PC-3 (cell line): ENCODE measurements at regions of chr3 and their contacts with region 1.

Region 1: GRCh38 chr3:122415720-122416654 is at the start of gene WDR5B:
- DNase-seq: peak; percentile 99
- ATAC-seq: peak; percentile 90
- H3K4me3 ChIP-seq: peak within 1 kb of the TSS; percentile 75
- H3K27ac ChIP-seq: peak within 1 kb of the TSS; percentile 74
- H3K4me1 ChIP-seq: peaks cover 27% of the 10 kb centered on the region
- H3K27me3 ChIP-seq: no peaks in the 10 kb centered on the region
- CTCF ChIP-seq: no peak
- total RNA-seq, gene WDR5B: 3.1 and 4.0 TPM in 2 replicates

Region 2: GRCh38 chr3:122383771-122384697 is 32.0 kb before region 1 on chr3 and contains the start of gene FAM162A:
- CTCF ChIA-PET with region 1: no interaction called
- POLR2A ChIA-PET with region 1: interaction called, 14 read pairs
- intact Hi-C with region 1: loop called (anchors 1 kb)
- DNase-seq: peak; percentile 98
- ATAC-seq: peak; percentile 90
- H3K4me3 ChIP-seq: peak within 1 kb of the TSS; percentile 90
- H3K27ac ChIP-seq: peak within 1 kb of the TSS; percentile 40
- H3K4me1 ChIP-seq: peaks cover 44% of the 10 kb centered on the region
- H3K27me3 ChIP-seq: no peaks in the 10 kb centered on the region
- CTCF ChIP-seq: peak; percentile 83
- total RNA-seq, gene FAM162A: 86.4 and 126 TPM in 2 replicates

Region 3: DNA sequence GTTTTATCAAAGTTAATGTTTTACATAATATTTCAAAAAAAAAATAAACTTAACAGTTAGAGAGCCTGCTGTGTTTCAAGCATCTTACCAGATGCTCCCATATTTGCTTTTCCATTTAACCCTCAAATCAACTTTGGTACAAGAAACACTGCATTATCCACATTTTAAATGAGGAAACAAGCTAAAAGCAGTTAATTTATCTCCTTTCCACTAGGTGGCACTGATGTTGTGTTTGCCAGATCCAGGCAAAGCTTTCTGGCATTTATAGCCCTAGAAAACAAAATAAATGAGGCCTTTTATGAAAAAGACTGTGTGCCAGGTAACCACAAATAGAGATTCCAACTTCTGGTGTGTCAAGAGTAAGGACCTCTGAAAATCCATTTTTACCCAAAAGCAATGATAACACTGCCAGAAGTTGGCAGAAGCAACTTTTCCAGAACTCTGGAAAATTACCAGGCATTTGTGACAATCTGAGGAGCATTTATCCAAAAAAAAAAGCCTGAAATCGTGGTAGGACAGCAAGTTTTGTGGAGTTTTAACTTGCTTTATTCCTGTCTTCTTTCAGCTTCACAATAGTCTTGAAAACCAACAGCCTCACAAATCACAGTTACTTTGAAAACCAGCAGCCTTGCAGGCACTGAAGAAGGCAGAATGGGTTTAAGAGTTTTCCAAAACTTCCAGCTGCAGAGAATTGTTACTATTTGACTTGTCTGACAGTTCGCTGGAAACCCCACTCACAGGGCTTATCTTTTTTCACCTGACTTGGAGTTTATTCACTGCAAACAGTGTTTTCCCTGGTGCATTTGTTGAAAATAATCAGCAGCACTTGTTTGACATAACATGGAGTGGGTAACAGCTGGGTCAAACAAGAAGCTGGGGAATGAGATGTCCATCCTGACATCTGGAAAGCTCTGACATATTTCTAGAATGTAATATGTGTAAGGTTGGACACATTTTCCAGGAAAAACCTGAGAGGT is 22.8 kb before region 1 on chr3:
- CTCF ChIA-PET with region 1: interaction called, 3 read pairs
- POLR2A ChIA-PET with region 1: interaction called, 5 read pairs
- intact Hi-C with region 1: loop called (anchors 2 kb)
- DNase-seq: peak; percentile 71
- ATAC-seq: peak; percentile 57
- H3K4me3 ChIP-seq: no peak overlapping the region
- H3K27ac ChIP-seq: no peak overlapping the region
- H3K4me1 ChIP-seq: no peaks in the 10 kb centered on the region
- H3K27me3 ChIP-seq: no peaks in the 10 kb centered on the region
- CTCF ChIP-seq: peak; percentile 93

Region 4: GRCh38 chr3:122468896-122469533 is 53.0 kb after region 1 on chr3:
- CTCF ChIA-PET with region 1: no interaction called
- POLR2A ChIA-PET with region 1: no interaction called
- intact Hi-C with region 1: no loop called
- DNase-seq: no peak
- ATAC-seq: no peak
- H3K4me3 ChIP-seq: no peak overlapping the region
- H3K27ac ChIP-seq: no peak overlapping the region
- H3K4me1 ChIP-seq: no peaks in the 10 kb centered on the region
- H3K27me3 ChIP-seq: no peaks in the 10 kb centered on the region
- CTCF ChIP-seq: no peak

Region 5: GRCh38 chr3:122555275-122556071 is 139.5 kb after region 1 on chr3:
- CTCF ChIA-PET with region 1: no interaction called
- POLR2A ChIA-PET with region 1: no interaction called
- intact Hi-C with region 1: no loop called
- DNase-seq: peak; percentile 87
- ATAC-seq: peak; percentile 96
- H3K4me3 ChIP-seq: no peak overlapping the region
- H3K27ac ChIP-seq: 0 out of 2 replicates have a peak overlapping the region, but pooled peaks have one; percentile 3
- H3K4me1 ChIP-seq: peaks cover 14% of the 10 kb centered on the region
- H3K27me3 ChIP-seq: no peaks in the 10 kb centered on the region
- CTCF ChIP-seq: no peak

Region 6: GRCh38 chr3:122745346-122746021 is 329.5 kb after region 1 on chr3:
- CTCF ChIA-PET with region 1: no interaction called
- POLR2A ChIA-PET with region 1: no interaction called
- intact Hi-C with region 1: no loop called
- DNase-seq: peak; percentile 43
- ATAC-seq: peak; percentile 95
- H3K4me3 ChIP-seq: no peak overlapping the region
- H3K27ac ChIP-seq: no peak overlapping the region
- H3K4me1 ChIP-seq: 0 out of 2 replicates have a peak, but pooled peaks cover 4% of the 10 kb centered on the region
- H3K27me3 ChIP-seq: no peaks in the 10 kb centered on the region
- CTCF ChIP-seq: no peak